ENCODE measurements at regions of chr6 and their contacts with region 1.

Region 1: GRCh38 chr6:73329201-73329600 is 24.9 kb downstream of the DPPA5 start:
- DNase-seq: no peak
- ATAC-seq: no peak
- H3K4me3 ChIP-seq: no peak overlapping the region
- H3K4me3 Mint-ChIP-seq: no peak overlapping the region
- H3K27ac ChIP-seq: no peak overlapping the region
- H3K27ac Mint-ChIP-seq: peak overlapping the region; percentile 33
- H3K4me1 ChIP-seq: no peaks in the 10 kb centered on the region
- H3K4me1 Mint-ChIP-seq: no peaks in the 10 kb centered on the region
- H3K27me3 ChIP-seq: no peaks in the 10 kb centered on the region
- H3K27me3 Mint-ChIP-seq: peaks cover 23% of the 10 kb centered on the region
- CTCF ChIP-seq: no peak

Region 2: GRCh38 chr6:72411872-72412708 is 917.1 kb before region 1 on chr6:
- CTCF ChIA-PET with region 1: interaction called, 19 read pairs
- POLR2A ChIA-PET with region 1: no interaction called
- intact Hi-C with region 1: loop called in 1 of 2 experiments (anchors 1 kb)
- DNase-seq: peak; percentile 57 to 87 (median 73)
- ATAC-seq: peak; percentile 98
- H3K4me3 ChIP-seq: no peak overlapping the region
- H3K4me3 Mint-ChIP-seq: no peak overlapping the region
- H3K27ac ChIP-seq: no peak overlapping the region
- H3K27ac Mint-ChIP-seq: no peak overlapping the region
- H3K4me1 ChIP-seq: no peaks in the 10 kb centered on the region
- H3K4me1 Mint-ChIP-seq: no peaks in the 10 kb centered on the region
- H3K27me3 ChIP-seq: no peaks in the 10 kb centered on the region
- H3K27me3 Mint-ChIP-seq: peaks cover 8% of the 10 kb centered on the region
- CTCF ChIP-seq: peak; percentile 100

Region 3: GRCh38 chr6:72622094-72622940 is 706.9 kb before region 1 on chr6:
- CTCF ChIA-PET with region 1: interaction called, 3 read pairs
- POLR2A ChIA-PET with region 1: no interaction called
- intact Hi-C with region 1: loop called (anchors 2 to 5 kb)
- DNase-seq: peak; percentile 34 to 82 (median 59)
- ATAC-seq: peak; percentile 42
- H3K4me3 ChIP-seq: peak overlapping the region; percentile 79 to 80
- H3K4me3 Mint-ChIP-seq: peak overlapping the region; percentile 96
- H3K27ac ChIP-seq: peak overlapping the region in 1 of 2 experiments; percentile 17
- H3K27ac Mint-ChIP-seq: peak overlapping the region; percentile 19
- H3K4me1 ChIP-seq: peaks cover 21% of the 10 kb centered on the region
- H3K4me1 Mint-ChIP-seq: peaks cover 57% of the 10 kb centered on the region
- H3K27me3 ChIP-seq: no peaks in the 10 kb centered on the region
- H3K27me3 Mint-ChIP-seq: no peaks in the 10 kb centered on the region
- CTCF ChIP-seq: peak; percentile 15

Region 4: DNA sequence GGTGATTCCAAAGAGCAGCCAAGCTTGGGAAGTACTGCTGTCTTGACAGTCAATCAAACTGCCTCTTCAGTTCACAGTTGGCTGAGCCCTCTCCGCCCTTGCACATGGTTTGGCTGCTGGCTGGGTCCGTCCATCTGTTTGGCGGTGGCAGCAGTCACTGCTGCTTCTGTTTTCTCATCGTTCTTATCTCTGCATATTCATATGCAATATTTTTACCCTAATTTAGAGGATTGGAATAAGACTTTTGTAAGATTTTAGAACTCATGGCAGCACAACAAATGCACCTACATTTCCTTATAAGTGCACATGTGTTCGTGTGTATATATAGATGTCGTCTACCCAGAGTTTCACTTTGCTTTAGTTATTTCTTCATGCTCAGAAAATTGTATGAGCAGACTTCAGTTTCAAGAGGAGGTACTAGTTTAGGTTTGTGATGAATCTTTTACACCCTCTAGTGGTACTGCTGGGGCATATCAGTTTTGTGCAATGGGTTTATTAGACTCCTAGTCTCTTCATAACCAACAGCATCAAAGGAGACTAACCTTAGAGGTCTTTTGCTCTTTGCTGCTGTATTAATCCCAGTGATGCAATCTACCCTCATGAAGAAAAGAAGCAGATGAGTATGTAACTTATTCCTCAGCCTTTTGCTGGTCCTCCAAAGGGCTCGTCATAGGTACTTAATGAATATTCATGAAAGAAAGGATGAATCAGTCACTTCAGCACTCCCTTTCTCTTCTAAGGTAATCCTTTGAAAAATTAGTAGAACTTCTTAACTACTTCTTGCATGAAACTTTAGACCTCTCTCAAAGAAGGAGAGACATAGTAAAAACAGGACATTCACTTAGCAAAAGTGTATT is 148.2 kb before region 1 on chr6:
- CTCF ChIA-PET with region 1: interaction called, 6 read pairs
- POLR2A ChIA-PET with region 1: no interaction called
- intact Hi-C with region 1: loop called in 1 of 2 experiments (anchors 5 kb)
- DNase-seq: peak in 2 of 9 experiments; percentile 49 to 61
- ATAC-seq: peak; percentile 82
- H3K4me3 ChIP-seq: no peak overlapping the region
- H3K4me3 Mint-ChIP-seq: peak overlapping the region; percentile 47
- H3K27ac ChIP-seq: no peak overlapping the region
- H3K27ac Mint-ChIP-seq: no peak overlapping the region
- H3K4me1 ChIP-seq: no peaks in the 10 kb centered on the region
- H3K4me1 Mint-ChIP-seq: peaks cover 4% of the 10 kb centered on the region
- H3K27me3 ChIP-seq: no peaks in the 10 kb centered on the region
- H3K27me3 Mint-ChIP-seq: no peaks in the 10 kb centered on the region
- CTCF ChIP-seq: peak; percentile 66

Region 5: GRCh38 chr6:73409395-73409794 is 80.2 kb after region 1 on chr6:
- CTCF ChIA-PET with region 1: no interaction called
- POLR2A ChIA-PET with region 1: no interaction called
- intact Hi-C with region 1: no loop called
- DNase-seq: no peak
- ATAC-seq: no peak
- H3K4me3 ChIP-seq: no peak overlapping the region
- H3K4me3 Mint-ChIP-seq: no peak overlapping the region
- H3K27ac ChIP-seq: no peak overlapping the region
- H3K27ac Mint-ChIP-seq: no peak overlapping the region
- H3K4me1 ChIP-seq: no peaks in the 10 kb centered on the region
- H3K4me1 Mint-ChIP-seq: no peaks in the 10 kb centered on the region
- H3K27me3 ChIP-seq: no peaks in the 10 kb centered on the region
- H3K27me3 Mint-ChIP-seq: no peaks in the 10 kb centered on the region
- CTCF ChIP-seq: no peak